ENCODE measurements at regions of chr1 and their contacts with region 1.

Region 1: DNA sequence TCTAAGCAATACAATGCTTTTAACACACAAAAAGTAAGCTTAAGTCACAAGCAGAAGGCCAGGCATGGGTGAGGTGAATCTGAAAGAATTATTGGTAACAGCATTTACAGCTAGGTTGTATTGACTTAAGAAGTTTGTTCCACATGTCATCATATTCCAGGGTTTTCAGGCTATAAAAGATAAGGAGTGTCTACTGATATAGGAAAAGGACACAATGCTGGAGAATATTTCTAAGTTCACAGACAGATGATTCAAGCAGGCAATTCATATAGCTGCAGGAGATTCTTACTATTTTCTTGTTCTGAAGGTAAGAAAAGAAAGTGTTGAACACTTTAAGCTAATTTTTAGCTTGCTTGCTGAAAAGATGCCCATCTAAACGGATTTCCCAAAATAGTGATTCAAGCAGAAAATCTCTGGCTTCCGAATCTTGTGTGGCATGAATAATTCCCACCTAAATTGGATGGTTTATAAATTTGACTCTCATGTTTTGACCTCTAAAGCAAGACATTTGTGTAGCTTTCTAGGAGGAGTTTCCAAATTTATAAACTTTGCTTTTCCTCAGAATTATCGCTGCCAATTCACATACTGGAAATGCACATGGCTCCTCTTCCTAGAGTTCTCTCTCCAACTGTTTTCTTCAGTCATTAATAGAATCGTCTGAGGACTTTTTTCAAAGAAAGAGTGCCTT is 95.6 kb upstream of the LBR start:
- DNase-seq: no peak
- H3K4me3 ChIP-seq: no peak overlapping the region
- H3K27ac ChIP-seq: no peak overlapping the region
- H3K4me1 ChIP-seq: no peaks in the 10 kb centered on the region
- H3K27me3 ChIP-seq: no peaks in the 10 kb centered on the region
- CTCF ChIP-seq: no peak
- POLR2A ChIP-seq: no peak

Region 2: DNA sequence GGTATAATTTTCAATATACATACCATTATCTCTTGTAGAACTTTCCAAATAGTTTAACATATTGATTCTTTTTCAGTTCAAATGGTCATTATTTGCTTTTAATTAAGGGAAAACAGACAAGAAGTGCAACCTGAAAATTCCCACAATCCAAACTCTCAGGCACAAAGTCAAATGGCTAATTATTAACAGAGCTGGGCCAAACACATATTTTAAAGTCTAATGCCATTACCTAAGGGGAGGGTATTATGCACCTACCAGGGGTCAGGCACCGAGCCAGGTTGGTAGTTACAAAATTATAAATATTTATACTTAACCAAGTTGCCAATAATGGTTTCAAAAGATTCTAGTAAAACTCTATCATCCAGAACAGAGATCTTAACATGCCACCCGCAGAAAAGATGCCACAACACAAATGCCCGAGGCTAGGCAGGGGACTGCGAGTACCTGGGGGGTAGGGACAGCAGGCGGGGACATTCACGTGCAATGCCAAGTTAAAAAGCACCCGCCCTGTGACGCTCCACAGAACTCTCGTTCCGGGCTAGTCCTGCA is 110.5 kb before region 1 on chr1:
- CTCF ChIA-PET with region 1: no interaction called
- POLR2A ChIA-PET with region 1: no interaction called
- dilution Hi-C with region 1: no loop called
- intact Hi-C with region 1: no loop called
- DNase-seq: no peak
- H3K4me3 ChIP-seq: no peak overlapping the region
- H3K27ac ChIP-seq: no peak overlapping the region
- H3K4me1 ChIP-seq: no peaks in the 10 kb centered on the region
- H3K27me3 ChIP-seq: no peaks in the 10 kb centered on the region
- CTCF ChIP-seq: no peak
- POLR2A ChIP-seq: no peak

Region 3: GRCh38 chr1:225508538-225509375 is 14.7 kb before region 1 on chr1:
- CTCF ChIA-PET with region 1: interaction called, 15 read pairs
- POLR2A ChIA-PET with region 1: no interaction called
- dilution Hi-C with region 1: no loop called
- intact Hi-C with region 1: no loop called
- DNase-seq: peak; percentile 97
- H3K4me3 ChIP-seq: no peak overlapping the region
- H3K27ac ChIP-seq: peak overlapping the region; percentile 72
- H3K4me1 ChIP-seq: peaks cover 23% of the 10 kb centered on the region
- H3K27me3 ChIP-seq: no peaks in the 10 kb centered on the region
- CTCF ChIP-seq: no peak
- POLR2A ChIP-seq: no peak

Measured in endothelial cell of umbilical vein (primary cell).